HEK293 (cell line): ENCODE measurements at regions of chrX and their contacts with region 1.

Region 1: GRCh38 chrX:154040307-154040756 is 20.6 kb upstream of the IRAK1 start:
- H3K4me3 ChIP-seq: no peak overlapping the region
- H3K27ac ChIP-seq: no peak overlapping the region
- H3K4me1 ChIP-seq: no peaks in the 10 kb centered on the region
- CTCF ChIP-seq: no peak

Region 2: DNA sequence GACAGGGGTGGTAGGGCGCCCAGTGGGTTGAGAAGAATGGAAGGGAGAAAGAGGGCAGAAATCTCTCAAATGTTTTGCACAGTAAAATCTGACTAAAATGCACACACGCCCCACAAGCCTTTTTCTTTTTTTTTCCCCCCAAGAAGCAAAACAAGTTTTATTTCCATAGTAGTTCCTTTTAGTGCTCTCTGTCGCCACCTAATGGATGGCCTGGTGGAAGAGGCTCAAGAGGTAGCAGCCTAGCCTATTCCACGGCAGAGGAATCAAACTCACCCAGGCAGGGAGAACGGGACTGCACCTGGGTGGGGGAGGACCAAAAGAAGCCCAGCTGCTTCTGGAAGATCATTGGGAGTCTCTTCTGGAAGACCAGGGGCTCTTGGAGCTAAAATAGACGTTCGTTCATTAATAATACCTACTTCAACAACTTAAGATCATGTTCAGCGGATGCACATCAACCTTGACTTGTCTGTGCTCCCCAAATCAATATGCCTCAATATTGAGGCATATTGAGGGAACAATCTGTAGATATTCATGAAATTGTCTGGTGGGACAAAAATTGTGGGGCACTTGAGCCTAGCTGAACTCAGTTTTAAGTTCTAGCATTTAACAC is 11.0 kb after region 1 on chrX:
- CTCF ChIA-PET with region 1: interaction called, 24 read pairs
- POLR2A ChIA-PET with region 1: no interaction called
- H3K4me3 ChIP-seq: no peak overlapping the region
- H3K27ac ChIP-seq: no peak overlapping the region
- H3K4me1 ChIP-seq: no peaks in the 10 kb centered on the region
- CTCF ChIP-seq: peak; percentile 64

Region 3: GRCh38 chrX:154082396-154083125 is 42.2 kb after region 1 on chrX:
- CTCF ChIA-PET with region 1: no interaction called
- POLR2A ChIA-PET with region 1: no interaction called
- H3K4me3 ChIP-seq: no peak overlapping the region
- H3K27ac ChIP-seq: no peak overlapping the region
- H3K4me1 ChIP-seq: no peaks in the 10 kb centered on the region
- CTCF ChIP-seq: no peak